Kidney (tissue), 22 donors: ENCODE measurements at regions of chr10 and their contacts with region 1.

Region 1: DNA sequence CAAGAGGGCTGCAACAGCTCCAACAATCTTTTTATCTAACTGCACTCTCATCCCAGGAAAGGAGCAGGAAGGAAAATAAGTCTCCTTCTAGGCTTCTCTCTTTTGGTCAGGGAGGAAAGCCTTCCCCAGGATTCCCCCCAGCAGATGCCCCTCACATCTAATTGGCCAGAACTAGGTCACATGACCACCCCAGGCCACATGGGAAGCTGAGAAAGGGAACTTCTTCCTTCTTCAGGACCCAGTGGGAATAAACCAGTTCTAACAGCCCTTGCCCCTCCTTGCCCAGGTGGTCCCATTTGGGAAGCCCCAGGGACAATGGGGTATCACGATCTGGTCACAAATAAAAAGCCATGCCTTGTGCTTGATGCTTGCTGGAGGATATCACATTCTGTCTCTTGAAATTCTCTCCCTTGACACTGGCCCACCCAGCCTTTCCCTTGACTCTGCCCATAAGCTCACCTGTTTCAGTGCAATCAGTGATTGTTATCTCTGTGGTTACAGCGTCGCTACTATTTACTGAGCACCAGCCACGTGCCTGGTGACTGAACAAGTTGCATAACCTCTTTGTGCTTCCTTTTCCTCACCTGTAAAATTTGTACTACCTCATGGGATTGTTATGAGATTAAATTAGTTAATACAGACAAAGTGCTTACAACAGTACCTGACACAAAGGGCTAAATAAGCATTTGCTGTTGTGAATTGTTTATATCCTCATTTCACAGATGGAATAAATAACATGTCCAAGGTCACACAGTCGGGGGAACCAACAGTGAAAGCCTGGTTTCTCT is 9.0 kb upstream of the TACR2 start:
- DNase-seq: no peak
- H3K4me3 ChIP-seq: no peak overlapping the region
- H3K27ac ChIP-seq: peak overlapping the region in 1 of 2 donors; percentile 38
- H3K4me1 ChIP-seq: peaks cover 0 to 6% (median 0%) of the 10 kb centered on the region in 3 donors
- H3K27me3 ChIP-seq: no peaks in the 10 kb centered on the region
- CTCF ChIP-seq: no peak

Region 2: GRCh38 chr10:69061305-69062161 is 364.2 kb before region 1 on chr10:
- intact Hi-C with region 1: no loop called
- DNase-seq: peak; percentile 19 to 87 (median 72)
- H3K4me3 ChIP-seq: peak overlapping the region; percentile 37 to 79 (median 62)
- H3K27ac ChIP-seq: peak overlapping the region; percentile 86 to 97
- H3K4me1 ChIP-seq: peaks cover 0 to 18% (median 9%) of the 10 kb centered on the region in 3 donors
- H3K27me3 ChIP-seq: no peaks in the 10 kb centered on the region
- CTCF ChIP-seq: no peak

Region 3: DNA sequence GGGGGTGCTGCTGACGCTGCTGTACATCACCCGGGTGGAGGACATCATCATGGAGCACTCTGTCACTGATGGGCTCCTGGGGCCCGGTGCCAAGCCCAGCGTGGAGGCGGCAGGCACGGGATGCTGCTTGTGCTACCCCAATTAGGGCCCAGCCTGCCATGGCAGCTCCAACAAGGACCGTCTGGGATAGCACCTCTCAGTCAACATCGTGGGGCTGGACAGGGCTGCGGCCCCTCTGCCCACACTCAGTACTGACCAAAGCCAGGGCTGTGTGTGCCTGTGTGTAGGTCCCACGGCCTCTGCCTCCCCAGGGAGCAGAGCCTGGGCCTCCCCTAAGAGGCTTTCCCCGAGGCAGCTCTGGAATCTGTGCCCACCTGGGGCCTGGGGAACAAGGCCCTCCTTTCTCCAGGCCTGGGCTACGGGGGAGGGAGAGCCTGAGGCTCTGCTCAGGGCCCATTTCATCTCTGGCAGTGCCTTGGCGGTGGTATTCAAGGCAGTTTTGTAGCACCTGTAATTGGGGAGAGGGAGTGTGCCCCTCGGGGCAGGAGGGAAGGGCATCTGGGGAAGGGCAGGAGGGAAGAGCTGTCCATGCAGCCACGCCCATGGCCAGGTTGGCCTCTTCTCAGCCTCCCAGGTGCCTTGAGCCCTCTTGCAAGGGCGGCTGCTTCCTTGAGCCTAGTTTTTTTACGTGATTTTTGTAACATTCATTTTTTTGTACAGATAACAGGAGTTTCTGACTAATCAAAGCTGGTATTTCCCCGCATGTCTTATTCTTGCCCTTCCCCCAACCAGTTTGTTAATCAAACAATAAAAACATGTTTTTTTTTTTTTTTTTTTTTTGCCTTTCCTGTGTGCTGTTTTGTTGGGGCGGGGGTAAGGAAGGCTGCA is 81.4 kb after region 1 on chr10:
- intact Hi-C with region 1: loop called (anchors 5 kb)
- DNase-seq: peak in 1 of 5 donors; percentile 56
- H3K4me3 ChIP-seq: peak overlapping the region in 1 of 3 donors; percentile 49
- H3K27ac ChIP-seq: no peak overlapping the region
- H3K4me1 ChIP-seq: peaks cover 0 to 5% (median 0%) of the 10 kb centered on the region in 3 donors
- H3K27me3 ChIP-seq: no peaks in the 10 kb centered on the region
- CTCF ChIP-seq: no peak